Gastrocnemius medialis (tissue), 4 donors: ENCODE measurements at regions of chr3 and their contacts with region 1.

Region 1: GRCh38 chr3:183825456-183826161 is at the start of gene MAP6D1:
- DNase-seq: peak in 1 of 2 donors; percentile 26
- ATAC-seq: peak; percentile 42 to 55
- H3K4me3 ChIP-seq: peak within 1 kb of the TSS; percentile 52 to 71 (median 62)
- H3K27ac ChIP-seq: peak within 1 kb of the TSS; percentile 67 to 75 (median 72)
- H3K4me1 ChIP-seq: peaks cover 23 to 29% of the 10 kb centered on the region in 2 donors
- H3K27me3 ChIP-seq: no peaks in the 10 kb centered on the region
- CTCF ChIP-seq: peak in 3 of 5 experiments; percentile 12 to 44 (median 22)
- POLR2A ChIP-seq: no peak
- total RNA-seq, gene MAP6D1: 2.5 to 13.8 (median 9.7) TPM

Region 2: DNA sequence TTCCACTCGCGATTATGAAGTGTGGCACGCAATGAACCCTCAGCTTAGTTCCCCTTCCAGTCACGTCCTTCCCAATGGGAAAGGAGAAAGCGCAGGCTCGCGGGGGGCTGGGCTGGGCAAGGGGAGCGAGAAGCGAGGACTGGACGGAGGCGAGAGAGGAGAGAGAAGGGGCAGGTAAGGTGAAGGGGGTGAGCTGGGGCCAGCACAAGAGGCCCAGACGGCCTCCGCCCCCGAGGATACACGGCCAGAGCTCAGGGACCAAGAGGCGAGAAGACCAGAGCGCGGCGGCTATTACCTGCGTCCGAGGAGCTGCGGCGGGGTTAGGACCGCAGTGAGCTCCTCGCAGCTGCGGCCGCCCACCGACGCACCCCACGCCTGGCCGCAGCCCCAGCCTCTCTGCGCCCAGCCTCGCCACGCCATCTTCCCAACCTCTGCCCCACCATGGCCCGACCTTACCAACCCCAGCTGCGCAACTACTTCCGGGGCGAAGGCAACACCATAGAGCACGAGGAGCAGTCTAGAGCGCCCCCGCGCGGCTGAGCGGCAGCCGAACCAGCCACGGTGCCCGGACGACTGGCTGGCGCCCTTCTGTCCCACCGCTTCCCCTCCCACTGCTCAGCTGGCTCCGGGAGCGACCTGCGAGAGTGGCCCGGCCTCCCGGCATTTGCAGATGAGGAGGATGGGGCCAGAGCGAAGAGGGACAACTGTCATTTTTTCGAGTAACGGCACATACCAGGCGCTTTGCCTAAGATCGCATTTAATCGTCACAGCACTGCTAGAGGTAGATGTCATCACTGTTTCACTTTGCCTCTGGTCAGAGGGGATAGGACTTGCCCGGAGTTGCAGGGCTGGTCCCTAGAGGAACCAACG is 59.1 kb after region 1 on chr3 and contains the start of gene PARL:
- in situ Hi-C with region 1: no loop called
- intact Hi-C with region 1: loop called (anchors 1 kb)
- DNase-seq: peak; percentile 93 to 94
- ATAC-seq: peak; percentile 98 to 99
- H3K4me3 ChIP-seq: peak within 1 kb of the TSS; percentile 83 to 96 (median 92)
- H3K27ac ChIP-seq: peak within 1 kb of the TSS; percentile 77 to 90 (median 88)
- H3K4me1 ChIP-seq: peaks cover 20 to 23% of the 10 kb centered on the region in 2 donors
- H3K27me3 ChIP-seq: no peaks in the 10 kb centered on the region
- CTCF ChIP-seq: peak; percentile 93 to 96 (median 96)
- POLR2A ChIP-seq: peak; percentile 43 to 72
- total RNA-seq, gene PARL: 30.5 to 49.5 (median 41.3) TPM